GM12878 (cell line): ENCODE measurements at regions of chr2 and their contacts with region 1.

Region 1: GRCh38 chr2:190583507-190584337 is 49.2 kb upstream of the NEMP2 start:
- DNase-seq: peak; percentile 21
- ATAC-seq: peak; percentile 85
- H3K4me3 ChIP-seq: 0 out of 2 replicates have a peak overlapping the region, but pooled peaks have one; percentile 27
- H3K27ac ChIP-seq: peak overlapping the region; percentile 72
- H3K4me1 ChIP-seq: peaks cover 18% of the 10 kb centered on the region
- H3K27me3 ChIP-seq: no peaks in the 10 kb centered on the region
- CTCF ChIP-seq: no peak
- EP300 ChIP-seq: peak; percentile 30 to 62; a peak in 3 of 4 replicates
- POLR2A ChIP-seq: no peak
- RAD21 ChIP-seq: no peak

Region 2: GRCh38 chr2:190551928-190552327 is 31.8 kb before region 1 on chr2:
- CTCF ChIA-PET with region 1: interaction called, 3 read pairs
- POLR2A ChIA-PET with region 1: interaction called, 4 read pairs
- RAD21 ChIA-PET with region 1: interaction called, 5 read pairs
- SMC1A ChIA-PET with region 1: interaction called, 29 read pairs
- in situ Hi-C with region 1: no loop called
- intact Hi-C with region 1: no loop called
- DNase-seq: no peak
- ATAC-seq: peak; percentile 64
- H3K4me3 ChIP-seq: no peak overlapping the region
- H3K27ac ChIP-seq: no peak overlapping the region
- H3K4me1 ChIP-seq: no peaks in the 10 kb centered on the region
- H3K27me3 ChIP-seq: no peaks in the 10 kb centered on the region
- CTCF ChIP-seq: no peak
- EP300 ChIP-seq: no peak
- POLR2A ChIP-seq: no peak
- RAD21 ChIP-seq: no peak

Region 3: GRCh38 chr2:190571686-190572085 is 12.0 kb before region 1 on chr2:
- CTCF ChIA-PET with region 1: interaction called, 10 read pairs
- POLR2A ChIA-PET with region 1: interaction called, 4 read pairs
- RAD21 ChIA-PET with region 1: interaction called, 8 read pairs
- SMC1A ChIA-PET with region 1: interaction called, 13 read pairs
- in situ Hi-C with region 1: no loop called
- intact Hi-C with region 1: no loop called
- DNase-seq: no peak
- ATAC-seq: peak; percentile 47; the same call in 2 of the 3 replicates
- H3K4me3 ChIP-seq: no peak overlapping the region
- H3K27ac ChIP-seq: no peak overlapping the region
- H3K4me1 ChIP-seq: no peaks in the 10 kb centered on the region
- H3K27me3 ChIP-seq: no peaks in the 10 kb centered on the region
- CTCF ChIP-seq: no peak
- EP300 ChIP-seq: no peak
- POLR2A ChIP-seq: no peak
- RAD21 ChIP-seq: no peak

Region 4: GRCh38 chr2:190607014-190607597 is 23.4 kb after region 1 on chr2:
- CTCF ChIA-PET with region 1: interaction called, 4 read pairs
- POLR2A ChIA-PET with region 1: interaction called, 4 read pairs
- RAD21 ChIA-PET with region 1: interaction called, 14 read pairs
- SMC1A ChIA-PET with region 1: interaction called, 9 read pairs
- in situ Hi-C with region 1: no loop called
- intact Hi-C with region 1: loop called (anchors 2 kb)
- DNase-seq: no peak
- ATAC-seq: peak; percentile 19; the same call in 1 of the 3 replicates
- H3K4me3 ChIP-seq: no peak overlapping the region
- H3K27ac ChIP-seq: no peak overlapping the region
- H3K4me1 ChIP-seq: peaks cover 15% of the 10 kb centered on the region
- H3K27me3 ChIP-seq: no peaks in the 10 kb centered on the region
- CTCF ChIP-seq: no peak
- EP300 ChIP-seq: no peak
- POLR2A ChIP-seq: no peak
- RAD21 ChIP-seq: no peak

Region 5: DNA sequence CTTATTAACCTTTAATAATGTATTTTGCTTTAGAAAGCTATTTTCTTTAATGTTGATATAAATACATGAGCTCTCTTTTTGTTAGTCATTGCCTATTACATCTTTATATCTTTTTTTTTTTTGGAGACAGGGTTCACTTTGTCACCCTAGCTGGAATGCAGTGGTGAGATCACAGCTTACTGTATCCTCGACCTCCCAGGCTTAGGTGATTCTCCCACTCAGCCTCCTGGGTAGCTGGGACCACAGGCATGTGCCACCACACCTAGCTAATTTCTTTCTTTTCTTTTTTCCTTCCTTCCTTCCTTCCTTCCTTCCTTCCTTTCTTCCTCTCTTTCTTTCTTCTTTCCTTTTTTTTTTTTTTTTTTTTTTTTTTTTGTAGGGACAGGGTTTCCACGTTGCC is 80.5 kb after region 1 on chr2:
- CTCF ChIA-PET with region 1: no interaction called
- POLR2A ChIA-PET with region 1: interaction called, 10 read pairs
- RAD21 ChIA-PET with region 1: interaction called, 3 read pairs
- SMC1A ChIA-PET with region 1: interaction called, 5 read pairs
- in situ Hi-C with region 1: no loop called
- intact Hi-C with region 1: no loop called
- DNase-seq: no peak
- ATAC-seq: no peak
- H3K4me3 ChIP-seq: no peak overlapping the region
- H3K27ac ChIP-seq: no peak overlapping the region
- H3K4me1 ChIP-seq: peaks cover 7% of the 10 kb centered on the region; the same call in 1 of the 2 replicates
- H3K27me3 ChIP-seq: no peaks in the 10 kb centered on the region
- CTCF ChIP-seq: no peak
- EP300 ChIP-seq: no peak
- POLR2A ChIP-seq: no peak
- RAD21 ChIP-seq: no peak

Region 6: DNA sequence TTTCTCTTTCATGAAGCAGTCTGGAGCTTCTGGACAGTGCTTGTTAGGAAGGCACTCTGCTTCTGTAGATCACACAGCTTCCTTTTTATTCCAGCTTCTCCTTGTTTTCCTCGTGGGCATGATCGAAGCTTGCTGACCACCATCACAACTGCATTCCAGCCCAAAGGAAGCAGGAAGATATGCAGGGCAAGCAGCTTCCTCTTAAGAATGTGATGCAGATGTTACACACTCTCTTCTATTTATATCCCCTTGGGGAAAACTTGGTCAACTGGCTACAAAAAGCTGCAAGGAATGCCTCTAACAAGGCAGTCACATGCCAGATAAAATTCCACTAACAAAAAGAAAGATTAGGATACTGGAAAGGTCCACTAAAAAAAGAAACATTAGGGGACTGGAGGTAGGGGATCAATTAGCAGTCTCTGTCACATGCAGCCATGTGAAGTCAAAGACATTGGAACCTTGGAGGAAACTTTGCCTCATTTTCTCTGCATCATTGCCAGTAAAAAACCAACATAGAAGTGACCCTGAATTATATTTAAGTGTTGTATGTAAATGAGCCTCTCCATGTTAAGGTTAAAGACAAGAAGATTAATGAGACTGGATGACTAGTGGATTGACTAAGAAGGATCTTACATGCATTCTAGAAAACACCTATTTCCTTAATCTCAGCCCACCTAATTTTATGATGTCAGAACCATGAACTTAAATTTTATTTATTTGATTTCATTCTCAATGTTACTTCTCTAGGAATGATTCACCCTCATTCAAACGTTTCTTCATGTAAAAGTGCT is 163.4 kb after region 1 on chr2:
- CTCF ChIA-PET with region 1: no interaction called
- POLR2A ChIA-PET with region 1: no interaction called
- RAD21 ChIA-PET with region 1: no interaction called
- SMC1A ChIA-PET with region 1: no interaction called
- in situ Hi-C with region 1: no loop called
- intact Hi-C with region 1: no loop called
- DNase-seq: no peak
- ATAC-seq: no peak
- H3K4me3 ChIP-seq: no peak overlapping the region
- H3K27ac ChIP-seq: no peak overlapping the region
- H3K4me1 ChIP-seq: no peaks in the 10 kb centered on the region
- H3K27me3 ChIP-seq: no peaks in the 10 kb centered on the region
- CTCF ChIP-seq: no peak
- EP300 ChIP-seq: no peak
- POLR2A ChIP-seq: no peak
- RAD21 ChIP-seq: no peak

Region 7: DNA sequence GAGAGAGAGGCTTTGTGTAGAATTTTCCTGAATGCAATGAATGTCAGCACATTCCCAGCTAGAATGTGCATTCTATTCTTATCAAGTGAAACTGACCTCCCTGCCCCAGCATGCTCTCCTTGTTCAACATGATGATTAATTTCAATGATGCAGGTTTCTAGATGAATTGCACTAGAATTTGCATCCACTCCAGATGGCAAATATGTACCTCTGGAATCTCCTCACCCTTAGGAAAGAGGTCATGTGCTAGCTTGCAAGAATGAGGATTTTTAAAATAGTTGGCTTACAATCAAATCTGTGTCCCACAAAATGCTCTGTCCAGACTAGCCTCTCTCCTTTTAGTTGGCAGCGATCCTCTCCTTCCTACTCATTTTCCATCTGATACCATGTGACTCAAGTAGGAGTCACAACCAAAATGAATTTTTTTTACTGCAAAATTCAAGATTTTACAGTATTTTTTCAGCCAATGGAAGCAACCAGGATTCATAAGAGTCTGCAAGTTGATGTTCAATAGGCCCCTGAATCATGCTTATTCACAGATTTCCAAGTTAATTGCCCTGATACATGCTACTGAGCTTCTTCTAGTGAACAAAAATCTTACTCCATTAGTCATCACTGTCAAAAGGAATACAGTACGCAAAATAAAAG is 588.1 kb after region 1 on chr2:
- CTCF ChIA-PET with region 1: no interaction called
- POLR2A ChIA-PET with region 1: no interaction called
- RAD21 ChIA-PET with region 1: no interaction called
- SMC1A ChIA-PET with region 1: no interaction called
- in situ Hi-C with region 1: no loop called
- intact Hi-C with region 1: no loop called
- DNase-seq: no peak
- ATAC-seq: no peak
- H3K4me3 ChIP-seq: no peak overlapping the region
- H3K27ac ChIP-seq: no peak overlapping the region
- H3K4me1 ChIP-seq: peaks cover 11% of the 10 kb centered on the region; the same call in 1 of the 2 replicates
- H3K27me3 ChIP-seq: no peaks in the 10 kb centered on the region
- CTCF ChIP-seq: no peak
- EP300 ChIP-seq: no peak
- POLR2A ChIP-seq: no peak
- RAD21 ChIP-seq: no peak

Region 8: GRCh38 chr2:191245046-191245868 is 661.5 kb after region 1 on chr2 and contains the start of gene MYO1B:
- CTCF ChIA-PET with region 1: no interaction called
- POLR2A ChIA-PET with region 1: no interaction called
- RAD21 ChIA-PET with region 1: no interaction called
- SMC1A ChIA-PET with region 1: no interaction called
- in situ Hi-C with region 1: no loop called
- intact Hi-C with region 1: no loop called
- DNase-seq: no peak
- ATAC-seq: peak; percentile 76
- H3K4me3 ChIP-seq: no peak within 1 kb of the TSS; the same call in 1 of the 2 replicates
- H3K27ac ChIP-seq: no peak within 1 kb of the TSS
- H3K4me1 ChIP-seq: no peaks in the 10 kb centered on the region
- H3K27me3 ChIP-seq: peaks cover 7 to 16% of the 10 kb centered on the region in 2 experiments
- CTCF ChIP-seq: peak in 2 of 3 experiments; percentile 16 to 17; a peak in 2 of 6 replicates
- EP300 ChIP-seq: no peak
- POLR2A ChIP-seq: no peak
- RAD21 ChIP-seq: no peak
- polyA plus RNA-seq, gene MYO1B: 0.40 to 0.57 TPM